Posterior cingulate gyrus (tissue), 11 donors: ENCODE measurements at regions of chr14 and their contacts with region 1.

Region 1: DNA sequence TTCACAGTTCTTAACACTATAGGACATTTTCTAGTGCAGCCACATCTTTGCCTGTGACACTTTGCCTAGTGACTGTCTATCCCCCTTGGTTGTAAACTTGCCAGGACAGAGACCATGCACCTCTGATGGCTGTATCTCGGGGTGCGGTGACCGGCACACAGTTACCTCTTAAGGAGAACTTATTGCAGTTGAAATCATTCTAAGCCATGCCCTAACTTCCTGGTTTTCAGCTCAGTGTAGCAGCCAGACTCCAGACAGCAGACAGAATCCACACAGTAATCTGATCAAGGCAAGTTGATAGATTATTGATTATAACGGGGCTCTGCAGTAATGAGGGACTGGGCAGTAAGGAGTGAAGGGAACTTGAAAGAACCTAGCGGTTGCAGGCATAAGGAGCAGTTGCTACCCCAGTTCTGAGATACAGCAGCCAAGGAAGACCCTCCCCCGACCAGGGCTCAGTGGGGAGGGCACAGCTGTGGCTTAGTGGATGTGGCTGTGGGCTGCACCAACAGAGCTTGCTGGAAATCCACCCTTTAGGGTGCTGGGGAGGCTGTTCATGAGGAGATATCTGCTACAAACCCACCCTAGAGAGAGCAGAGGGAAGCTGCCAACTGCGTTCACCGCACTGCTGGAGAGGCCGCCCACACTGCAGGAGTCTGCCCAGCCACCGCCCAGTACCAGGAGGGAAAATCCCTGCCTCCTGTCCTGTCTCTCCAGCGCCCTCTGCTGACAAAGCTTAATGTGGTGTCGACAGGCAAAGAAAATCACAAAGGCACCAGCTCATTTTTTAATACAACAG is 58.2 kb upstream of the BEGAIN start:
- DNase-seq: peak; percentile 63 to 96 (median 84)

Region 2: DNA sequence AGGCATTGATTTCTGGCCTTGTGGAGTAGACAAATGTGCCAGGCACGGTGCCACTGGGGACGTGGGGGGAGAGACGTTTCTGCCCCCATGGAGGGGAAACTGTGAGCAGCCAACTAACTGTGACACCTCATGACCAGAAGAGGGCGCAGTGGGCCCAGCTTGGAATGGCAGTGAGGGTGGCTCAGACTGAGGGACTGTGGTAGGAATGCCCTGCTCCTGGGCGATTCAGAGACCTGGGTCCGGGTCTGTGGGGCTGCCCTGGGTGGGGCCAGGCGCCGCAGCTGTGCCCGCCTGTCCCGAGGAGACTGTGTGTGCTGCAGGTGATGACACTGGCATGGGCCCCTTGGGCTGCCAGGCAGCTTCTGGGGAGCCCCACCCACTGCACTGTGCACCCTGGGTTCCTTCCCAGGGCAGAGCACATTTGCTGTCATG is 261.6 kb before region 1 on chr14:
- intact Hi-C with region 1: loop called (anchors 5 kb)
- DNase-seq: peak in 9 of 10 donors; percentile 52 to 95 (median 70)

Region 3: GRCh38 chr14:100440187-100440631 is 205.2 kb before region 1 on chr14:
- intact Hi-C with region 1: loop called (anchors 2 kb)
- DNase-seq: peak; percentile 66 to 97 (median 82)

Region 4: GRCh38 chr14:100524933-100525243 is 120.5 kb before region 1 on chr14:
- intact Hi-C with region 1: loop called (anchors 1 kb)
- DNase-seq: peak in 6 of 10 donors; percentile 1 to 90 (median 22)